AG04450 (cell line): ENCODE measurements at regions of chr15 and their contacts with region 1.

Region 1: GRCh38 chr15:50765195-50765973 is at the start of gene SPPL2A:
- DNase-seq: peak; percentile 60
- H3K4me3 ChIP-seq: peak within 1 kb of the TSS; percentile 75
- H3K27ac ChIP-seq: peak within 1 kb of the TSS; percentile 75
- H3K27me3 ChIP-seq: no peaks in the 10 kb centered on the region
- CTCF ChIP-seq: no peak
- polyA plus RNA-seq, gene SPPL2A: 70.2 and 80.1 TPM in 2 replicates

Region 2: DNA sequence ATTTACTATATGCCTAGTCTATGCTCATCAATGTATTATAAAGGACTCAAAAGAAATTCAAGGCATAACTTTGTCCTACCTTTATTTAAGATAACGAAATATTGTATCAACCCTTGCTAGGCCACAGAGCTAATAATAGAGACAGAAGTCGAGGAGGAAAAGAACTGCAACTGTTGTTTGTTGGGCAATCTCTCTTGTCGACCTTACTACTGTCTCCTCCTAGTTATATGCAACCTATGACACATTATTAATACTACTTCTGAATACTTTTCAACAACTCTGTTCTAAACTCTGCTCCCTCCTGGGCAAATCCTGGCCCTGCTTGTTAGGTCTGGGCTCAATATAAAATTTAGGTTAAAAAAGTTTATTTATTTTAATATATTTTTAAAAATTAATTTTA is 24.4 kb before region 1 on chr15:
- CTCF ChIA-PET with region 1: interaction called, 4 read pairs
- POLR2A ChIA-PET with region 1: interaction called, 11 read pairs
- DNase-seq: no peak
- H3K4me3 ChIP-seq: no peak overlapping the region
- H3K27ac ChIP-seq: no peak overlapping the region
- H3K27me3 ChIP-seq: no peaks in the 10 kb centered on the region
- CTCF ChIP-seq: no peak

Region 3: GRCh38 chr15:50857763-50858162 is 92.4 kb after region 1 on chr15:
- CTCF ChIA-PET with region 1: no interaction called
- POLR2A ChIA-PET with region 1: interaction called, 11 read pairs
- DNase-seq: no peak
- H3K4me3 ChIP-seq: no peak overlapping the region
- H3K27ac ChIP-seq: no peak overlapping the region
- H3K27me3 ChIP-seq: peaks cover 5% of the 10 kb centered on the region
- CTCF ChIP-seq: no peak